PC-9 (cell line): ENCODE measurements at regions of chr10 and their contacts with region 1.

Region 1: DNA sequence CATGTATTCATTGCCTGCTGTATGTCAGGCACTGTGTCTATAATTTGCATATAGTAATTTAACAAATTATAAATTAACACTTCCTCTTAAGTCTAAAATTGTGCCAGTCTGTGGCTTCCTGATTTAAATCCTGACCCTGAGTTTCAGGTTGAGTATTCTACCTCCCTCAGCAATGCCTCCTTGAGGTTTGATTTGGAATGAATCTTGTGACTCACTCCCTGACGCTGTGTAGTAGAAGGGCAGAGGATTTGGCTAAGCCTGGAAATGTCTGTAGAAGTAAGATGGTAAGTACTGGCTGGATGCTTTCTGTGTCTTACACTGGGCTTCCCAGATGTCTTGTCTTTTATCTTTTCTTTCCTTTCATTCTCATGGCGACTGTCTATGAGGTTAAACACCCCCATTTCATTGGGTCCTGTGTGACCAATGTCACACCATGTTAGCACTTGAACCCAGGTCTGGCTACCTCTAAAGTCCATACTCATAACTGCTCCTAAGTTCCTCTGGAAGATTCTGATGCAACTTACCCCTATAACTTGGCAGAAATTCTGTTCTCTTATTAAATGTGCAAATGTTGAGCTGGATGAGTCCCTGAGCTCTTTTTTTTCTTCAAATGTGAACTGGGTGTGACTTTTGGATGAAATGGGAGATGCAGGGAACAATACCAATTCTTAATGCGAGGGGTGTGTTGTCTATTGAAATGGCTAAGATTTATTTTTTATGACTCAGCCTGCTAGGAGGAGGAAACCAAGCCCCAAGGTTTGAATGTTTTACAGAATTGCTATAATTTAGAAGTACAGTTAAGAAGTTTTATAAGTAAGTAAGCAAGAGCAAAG is 48.5 kb downstream of the PLCE1 start:
- DNase-seq: peak; percentile 31 to 61
- H3K4me3 ChIP-seq: no peak overlapping the region
- H3K27ac ChIP-seq: peak overlapping the region; percentile 63
- H3K4me1 ChIP-seq: peaks cover 34% of the 10 kb centered on the region
- H3K27me3 ChIP-seq: no peaks in the 10 kb centered on the region
- CTCF ChIP-seq: no peak

Region 2: DNA sequence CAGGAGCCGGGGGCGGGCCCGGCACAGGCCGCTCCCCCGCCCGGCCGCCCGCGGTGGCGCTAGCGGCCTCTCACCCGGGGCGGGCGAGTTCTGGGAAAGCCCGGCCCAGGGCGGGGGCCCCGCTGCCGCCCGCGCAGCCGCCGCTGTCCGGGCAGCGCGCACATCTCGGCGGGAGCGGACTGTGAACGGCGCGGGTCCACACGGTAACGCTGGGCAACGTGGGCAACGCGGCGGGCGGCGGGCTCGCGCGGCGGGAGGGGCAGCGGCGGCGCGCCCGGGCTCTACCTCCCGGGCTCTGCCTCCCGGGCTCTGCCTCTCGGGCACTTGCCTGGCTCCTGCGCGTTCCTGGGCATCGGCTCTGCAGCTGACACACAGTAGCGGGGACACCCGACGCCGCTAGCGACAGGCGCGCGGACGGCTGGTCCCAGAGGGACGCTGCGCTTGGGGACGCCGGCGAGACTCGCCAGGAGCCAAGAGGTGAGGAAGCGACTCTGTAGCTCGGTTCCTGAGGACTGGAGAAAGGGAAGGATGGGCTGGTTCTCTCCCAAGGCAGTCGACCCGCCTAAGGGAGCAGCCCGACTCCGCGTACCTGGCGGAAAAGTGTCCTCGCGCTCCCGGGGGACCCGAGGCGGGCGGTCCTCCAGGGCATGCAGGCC is 48.3 kb before region 1 on chr10 and contains the start of gene PLCE1:
- CTCF ChIA-PET with region 1: no interaction called
- POLR2A ChIA-PET with region 1: interaction called, 5 read pairs
- intact Hi-C with region 1: loop called (anchors 2 kb)
- DNase-seq: peak; percentile 42 to 65
- H3K4me3 ChIP-seq: peak within 1 kb of the TSS; percentile 79
- H3K27ac ChIP-seq: no peak within 1 kb of the TSS; the same call in 1 of the 2 replicates
- H3K4me1 ChIP-seq: peaks cover 56% of the 10 kb centered on the region
- H3K27me3 ChIP-seq: no peaks in the 10 kb centered on the region
- CTCF ChIP-seq: no peak
- total RNA-seq, gene PLCE1: 14.8 and 15.2 TPM in 2 replicates

Region 3: DNA sequence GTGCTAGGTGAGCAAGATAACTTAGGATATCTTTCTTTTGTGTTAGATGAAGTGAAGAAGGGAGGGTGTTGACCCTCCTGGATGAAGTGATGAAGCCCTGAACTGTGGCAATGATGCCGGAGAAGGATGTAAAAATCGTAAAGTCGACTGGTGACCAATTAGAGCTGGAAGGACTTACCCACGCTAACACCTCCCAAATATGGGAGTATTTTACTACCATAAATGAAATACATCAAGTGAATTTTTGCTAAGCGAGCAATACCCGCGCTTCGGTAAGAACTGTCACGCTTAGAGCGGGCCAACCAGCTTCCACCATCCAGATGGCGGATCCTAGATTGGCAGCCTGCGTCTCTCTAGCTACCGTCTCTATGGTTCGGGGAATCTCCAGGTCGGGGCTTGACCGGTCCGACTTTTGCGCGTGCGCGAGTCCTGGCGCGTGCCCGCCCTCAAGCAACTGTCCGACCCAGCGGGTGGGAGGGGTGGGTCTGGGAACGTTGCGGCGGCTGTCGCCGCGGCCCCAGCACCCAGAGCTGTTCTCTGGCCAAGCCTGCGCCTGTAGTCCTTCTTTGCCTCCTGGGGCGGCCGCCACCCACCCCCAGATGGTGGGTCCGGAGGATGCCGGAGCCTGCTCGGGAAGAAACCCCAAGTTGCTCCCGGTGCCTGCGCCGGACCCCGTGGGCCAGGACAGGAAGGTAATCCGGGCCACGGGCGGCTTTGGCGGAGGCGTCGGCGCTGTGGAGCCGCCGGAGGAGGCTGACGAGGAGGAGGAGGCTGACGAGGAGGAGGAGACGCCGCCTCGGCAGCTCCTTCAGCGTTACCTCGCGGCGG is 360.0 kb after region 1 on chr10 and contains the start of gene TBC1D12:
- CTCF ChIA-PET with region 1: no interaction called
- POLR2A ChIA-PET with region 1: no interaction called
- intact Hi-C with region 1: loop called (anchors 2 kb)
- DNase-seq: peak; percentile 82 to 90
- H3K4me3 ChIP-seq: peak within 1 kb of the TSS; percentile 76
- H3K27ac ChIP-seq: peak within 1 kb of the TSS; percentile 56
- H3K4me1 ChIP-seq: peaks cover 23% of the 10 kb centered on the region; the same call in 1 of the 2 replicates
- H3K27me3 ChIP-seq: no peaks in the 10 kb centered on the region
- CTCF ChIP-seq: no peak
- total RNA-seq, gene TBC1D12: 3.1 and 3.9 TPM in 2 replicates